Activated CD8-positive, alpha-beta T cell treated with anti-CD3 and anti-CD28 coated beads, Interleukin-2, amount 10 ng/mL, durations not matched to agents 7 days and 5 days (primary cell): ENCODE measurements at regions of chr12 and their contacts with region 1.

Region 1: DNA sequence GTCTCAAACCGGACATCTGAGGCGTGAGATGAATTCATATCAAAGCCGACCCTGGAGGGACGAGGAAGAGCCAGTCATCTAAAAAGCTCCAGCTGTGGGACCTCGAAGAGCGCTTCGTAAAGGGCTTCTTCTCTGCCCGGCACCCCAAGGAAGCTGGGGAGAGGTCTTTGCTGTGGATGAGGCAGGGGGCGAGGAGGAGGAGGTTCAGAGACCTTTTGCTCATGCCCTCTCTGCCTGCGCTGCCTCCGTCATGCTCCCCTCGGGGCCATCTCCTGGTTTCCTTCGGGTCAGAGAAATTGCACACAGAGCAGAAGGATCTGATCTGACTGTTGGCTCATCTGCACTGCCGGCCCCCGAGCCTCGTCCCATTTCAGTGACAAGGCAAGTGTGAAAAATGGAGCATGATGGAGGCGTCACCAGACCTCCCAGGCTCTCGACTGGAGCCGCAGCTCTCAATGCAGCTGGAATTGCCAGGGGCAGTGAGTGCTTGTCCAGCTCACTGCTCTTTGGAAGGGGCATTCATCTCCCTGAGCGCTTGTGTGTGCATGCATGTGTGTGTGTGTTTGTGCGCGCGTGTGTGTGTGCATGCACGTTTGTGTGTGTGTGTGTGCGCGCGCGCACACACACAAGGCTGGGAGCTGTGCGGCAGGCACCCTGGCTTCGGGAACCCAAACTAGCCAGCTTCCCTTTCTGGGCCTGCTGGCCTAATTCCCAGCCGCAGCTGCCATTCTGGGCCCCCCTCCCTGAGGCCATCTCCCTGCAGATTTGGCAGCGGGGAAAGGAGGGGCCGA is 9.2 kb downstream of the CABP1 start:
- DNase-seq: no peak
- ATAC-seq: peak; percentile 7
- H3K4me3 Mint-ChIP-seq: peak overlapping the region; percentile 57
- H3K27ac Mint-ChIP-seq: no peak overlapping the region
- H3K4me1 Mint-ChIP-seq: peaks cover 14% of the 10 kb centered on the region
- H3K27me3 Mint-ChIP-seq: peaks cover 54% of the 10 kb centered on the region

Region 2: GRCh38 chr12:120432772-120433525 is 216.7 kb before region 1 on chr12:
- CTCF ChIA-PET with region 1: no interaction called
- POLR2A ChIA-PET with region 1: no interaction called
- DNase-seq: no peak
- ATAC-seq: no peak
- H3K4me3 Mint-ChIP-seq: no peak overlapping the region
- H3K27ac Mint-ChIP-seq: no peak overlapping the region
- H3K4me1 Mint-ChIP-seq: peaks cover 15% of the 10 kb centered on the region
- H3K27me3 Mint-ChIP-seq: peaks cover 9% of the 10 kb centered on the region

Region 3: DNA sequence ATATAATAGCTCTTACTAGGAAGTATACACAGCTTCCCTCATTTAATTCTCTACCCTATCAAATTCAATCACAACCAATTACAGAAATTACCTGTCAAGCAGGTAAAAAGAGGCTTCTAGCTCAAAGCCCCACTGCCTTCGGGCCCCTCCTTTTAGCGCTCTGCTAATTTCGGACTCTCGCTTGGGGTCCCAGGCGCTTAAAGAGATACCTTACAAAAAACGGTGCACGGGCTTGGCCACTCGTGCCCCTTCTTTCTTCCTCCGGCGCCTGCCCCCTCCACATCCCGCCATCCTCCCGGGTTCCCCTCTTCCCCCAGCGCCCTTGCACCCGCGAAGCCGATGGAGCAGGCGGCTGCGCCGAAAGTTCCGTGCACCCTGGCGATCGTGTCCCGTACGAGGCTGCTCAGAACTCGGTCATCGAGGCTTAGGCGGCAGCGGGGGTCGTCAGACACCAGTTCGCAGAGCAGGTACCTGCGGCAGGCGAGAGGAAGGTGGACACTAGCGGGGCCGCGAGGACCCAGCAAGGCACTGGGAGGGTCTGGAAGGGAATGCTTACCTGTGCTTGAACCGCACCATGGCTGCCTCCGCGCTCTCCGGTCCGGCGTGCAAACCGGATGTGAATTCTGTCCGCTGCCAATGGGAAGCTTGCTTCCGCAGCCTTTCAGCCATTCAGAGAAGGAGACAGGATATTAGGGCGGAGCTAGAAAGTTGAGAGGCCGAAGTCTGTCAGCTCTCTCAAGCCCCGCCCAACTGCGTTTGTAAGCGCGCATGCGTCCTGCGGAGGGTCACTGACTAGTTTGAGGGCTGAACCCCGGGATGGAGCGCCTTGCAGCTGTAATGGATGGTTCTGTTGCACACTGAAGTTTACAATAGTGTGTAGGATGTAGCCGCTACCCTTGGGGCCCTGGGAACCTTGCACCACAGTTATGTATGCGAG is 68.6 kb before region 1 on chr12 and contains the start of gene POP5:
- CTCF ChIA-PET with region 1: interaction called, 121 read pairs
- POLR2A ChIA-PET with region 1: no interaction called
- DNase-seq: peak; percentile 97
- ATAC-seq: peak; percentile 97
- H3K4me3 Mint-ChIP-seq: peak within 1 kb of the TSS; percentile 99
- H3K27ac Mint-ChIP-seq: peak within 1 kb of the TSS; percentile 96
- H3K4me1 Mint-ChIP-seq: peaks cover 41% of the 10 kb centered on the region
- H3K27me3 Mint-ChIP-seq: peaks cover 15% of the 10 kb centered on the region
- total RNA-seq, gene POP5: 63.3 to 64.0 TPM

Region 4: GRCh38 chr12:120625557-120626419 is 23.8 kb before region 1 on chr12:
- CTCF ChIA-PET with region 1: interaction called, 75 read pairs
- POLR2A ChIA-PET with region 1: no interaction called
- DNase-seq: peak; percentile 27
- ATAC-seq: no peak
- H3K4me3 Mint-ChIP-seq: no peak overlapping the region
- H3K27ac Mint-ChIP-seq: no peak overlapping the region
- H3K4me1 Mint-ChIP-seq: no peaks in the 10 kb centered on the region
- H3K27me3 Mint-ChIP-seq: peaks cover 7% of the 10 kb centered on the region

Region 5: GRCh38 chr12:120677765-120678473 is 28.3 kb after region 1 on chr12:
- CTCF ChIA-PET with region 1: interaction called, 63 read pairs
- POLR2A ChIA-PET with region 1: no interaction called
- DNase-seq: peak; percentile 46
- ATAC-seq: peak; percentile 52
- H3K4me3 Mint-ChIP-seq: no peak overlapping the region
- H3K27ac Mint-ChIP-seq: peak overlapping the region; percentile 77
- H3K4me1 Mint-ChIP-seq: peaks cover 33% of the 10 kb centered on the region
- H3K27me3 Mint-ChIP-seq: peaks cover 4% of the 10 kb centered on the region

Region 6: DNA sequence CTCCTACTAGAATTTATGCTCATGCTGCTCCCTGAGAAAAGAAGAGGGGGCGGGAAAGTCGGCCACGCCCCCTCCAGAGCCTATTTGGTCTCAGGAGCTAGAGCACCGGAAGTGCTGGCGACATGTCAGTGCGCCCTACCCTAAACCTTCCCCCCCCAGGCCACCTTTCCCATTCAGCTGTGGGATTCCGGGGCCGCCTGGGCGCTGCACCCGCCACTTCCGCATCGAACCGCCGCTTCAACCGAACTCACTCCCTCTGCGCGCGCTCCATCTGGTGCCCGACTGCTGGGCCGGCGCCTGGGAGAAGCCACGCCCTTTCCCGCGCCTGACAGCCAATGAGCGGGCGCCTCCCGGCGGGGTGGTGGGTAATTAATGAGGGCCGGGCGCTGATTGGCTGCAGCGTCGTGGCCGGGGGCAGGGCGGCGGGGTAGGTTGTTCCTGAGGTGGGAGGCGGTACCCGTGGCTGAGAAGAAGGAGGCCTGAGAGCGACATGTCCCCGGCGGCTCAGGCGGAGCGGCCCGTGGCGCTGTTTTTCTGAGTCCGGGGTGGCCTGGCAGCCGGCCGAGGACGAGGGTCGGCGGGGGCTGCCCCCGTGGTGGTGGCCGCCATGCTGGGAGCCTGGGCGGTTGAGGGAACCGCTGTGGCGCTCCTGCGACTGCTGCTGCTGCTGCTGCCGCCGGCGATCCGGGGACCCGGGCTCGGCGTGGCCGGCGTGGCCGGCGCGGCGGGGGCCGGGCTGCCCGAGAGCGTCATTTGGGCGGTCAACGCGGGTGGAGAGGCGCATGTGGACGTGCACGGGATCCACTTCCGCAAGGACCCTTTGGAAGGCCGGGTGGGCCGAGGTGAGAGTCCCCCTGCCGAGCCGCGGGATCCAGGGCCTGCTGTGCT is 37.3 kb after region 1 on chr12 and contains the start of gene MLEC:
- CTCF ChIA-PET with region 1: interaction called, 98 read pairs
- POLR2A ChIA-PET with region 1: interaction called, 3 read pairs
- DNase-seq: peak; percentile 99
- ATAC-seq: peak; percentile 87
- H3K4me3 Mint-ChIP-seq: peak within 1 kb of the TSS; percentile 93
- H3K27ac Mint-ChIP-seq: peak within 1 kb of the TSS; percentile 81
- H3K4me1 Mint-ChIP-seq: peaks cover 54% of the 10 kb centered on the region
- H3K27me3 Mint-ChIP-seq: no peaks in the 10 kb centered on the region
- total RNA-seq, gene MLEC: 95.0 to 102 TPM

Region 7: DNA sequence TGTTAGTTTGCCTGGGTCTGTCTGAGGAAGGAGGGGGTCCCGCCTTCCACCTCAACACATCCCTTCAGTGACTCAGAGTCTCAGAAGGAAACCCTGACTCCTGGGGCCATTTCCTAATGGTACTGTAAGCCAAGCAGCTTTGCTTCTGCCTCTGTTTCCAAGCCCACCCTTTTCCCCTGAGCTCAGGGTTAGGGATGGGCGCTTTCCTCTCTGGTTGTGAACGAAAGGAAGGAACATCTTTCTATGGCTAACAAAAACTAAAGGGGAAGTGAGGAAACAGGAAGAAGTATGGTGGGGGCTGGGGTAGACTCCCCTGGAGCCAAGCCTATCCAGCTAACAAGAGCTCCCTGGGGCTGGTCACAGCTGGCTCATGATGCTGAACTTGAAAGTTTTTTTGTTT is 49.0 kb after region 1 on chr12:
- CTCF ChIA-PET with region 1: interaction called, 98 read pairs
- POLR2A ChIA-PET with region 1: no interaction called
- DNase-seq: no peak
- ATAC-seq: no peak
- H3K4me3 Mint-ChIP-seq: no peak overlapping the region
- H3K27ac Mint-ChIP-seq: no peak overlapping the region
- H3K4me1 Mint-ChIP-seq: no peaks in the 10 kb centered on the region
- H3K27me3 Mint-ChIP-seq: no peaks in the 10 kb centered on the region

Region 8: GRCh38 chr12:120710031-120710804 is 60.6 kb after region 1 on chr12 and contains the start of gene UNC119B:
- CTCF ChIA-PET with region 1: interaction called, 55 read pairs
- POLR2A ChIA-PET with region 1: no interaction called
- DNase-seq: peak; percentile 77
- ATAC-seq: peak; percentile 83
- H3K4me3 Mint-ChIP-seq: peak within 1 kb of the TSS; percentile 87
- H3K27ac Mint-ChIP-seq: peak within 1 kb of the TSS; percentile 81
- H3K4me1 Mint-ChIP-seq: peaks cover 37% of the 10 kb centered on the region
- H3K27me3 Mint-ChIP-seq: no peaks in the 10 kb centered on the region
- total RNA-seq, gene UNC119B: 18.5 to 18.9 TPM